ENCODE measurements at regions of chr5 and their contacts with region 1.

Region 1: GRCh38 chr5:123700398-123701287 is 188.7 kb downstream of the CSNK1G3 start:
- DNase-seq: peak in 3 of 5 donors; percentile 16 to 38 (median 24)
- ATAC-seq: peak; percentile 65 to 87 (median 74)
- H3K4me3 ChIP-seq: no peak overlapping the region
- H3K27ac ChIP-seq: peak overlapping the region in 6 of 12 donors; percentile 4 to 53 (median 44)
- H3K4me1 ChIP-seq: peaks cover 0 to 30% (median 9%) of the 10 kb centered on the region in 12 donors
- H3K27me3 ChIP-seq: no peaks in the 10 kb centered on the region
- CTCF ChIP-seq: no peak
- POLR2A ChIP-seq: no peak

Region 2: GRCh38 chr5:123807177-123807945 is 106.7 kb after region 1 on chr5:
- intact Hi-C with region 1: loop called in 2 of 10 experiments (anchors 5 kb)
- DNase-seq: peak in 1 of 5 donors; percentile 24
- ATAC-seq: peak; percentile 75 to 82 (median 77)
- H3K4me3 ChIP-seq: no peak overlapping the region
- H3K27ac ChIP-seq: peak overlapping the region in 10 of 12 donors; percentile 14 to 69 (median 42)
- H3K4me1 ChIP-seq: peaks cover 6 to 48% (median 34%) of the 10 kb centered on the region in 12 donors
- H3K27me3 ChIP-seq: no peaks in the 10 kb centered on the region
- CTCF ChIP-seq: no peak
- POLR2A ChIP-seq: no peak

Measured in heart left ventricle (tissue), 16 donors.